Heart left ventricle (tissue), 16 donors: ENCODE measurements at regions of chr15 and their contacts with region 1.

Region 1: DNA sequence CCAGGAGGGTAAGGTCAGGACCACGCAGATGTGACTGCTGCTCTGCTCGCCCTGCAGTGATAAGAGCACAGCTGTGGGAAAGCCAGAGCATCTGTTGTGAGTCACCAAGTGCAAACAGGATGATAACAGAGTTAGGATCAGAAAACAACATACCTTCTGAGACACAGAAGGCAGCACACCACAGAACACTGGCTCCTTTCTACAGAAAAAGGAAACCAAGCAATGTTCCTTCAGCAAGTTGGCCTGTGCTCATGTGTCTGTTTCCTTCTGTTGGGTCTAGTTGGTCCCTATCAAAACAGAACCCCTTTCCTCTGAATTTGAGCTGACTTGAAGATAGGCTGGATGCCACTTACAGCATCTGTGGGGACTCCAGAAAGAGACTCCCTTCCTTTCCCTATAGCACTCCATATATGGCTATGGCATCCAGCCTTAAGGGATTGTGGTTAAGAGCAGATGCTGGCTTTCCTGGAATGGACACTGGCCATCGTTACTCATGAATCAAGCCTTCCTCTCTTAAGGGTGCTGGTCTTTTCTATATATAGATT is 440.7 kb upstream of the THBS1 start:
- DNase-seq: no peak
- ATAC-seq: peak; percentile 64 to 82 (median 76)
- H3K4me3 ChIP-seq: no peak overlapping the region
- H3K27ac ChIP-seq: peak overlapping the region in 1 of 12 donors; percentile 56
- H3K4me1 ChIP-seq: peaks cover 0 to 10% (median 0%) of the 10 kb centered on the region in 12 donors
- H3K27me3 ChIP-seq: no peaks in the 10 kb centered on the region
- CTCF ChIP-seq: no peak
- POLR2A ChIP-seq: no peak

Region 2: DNA sequence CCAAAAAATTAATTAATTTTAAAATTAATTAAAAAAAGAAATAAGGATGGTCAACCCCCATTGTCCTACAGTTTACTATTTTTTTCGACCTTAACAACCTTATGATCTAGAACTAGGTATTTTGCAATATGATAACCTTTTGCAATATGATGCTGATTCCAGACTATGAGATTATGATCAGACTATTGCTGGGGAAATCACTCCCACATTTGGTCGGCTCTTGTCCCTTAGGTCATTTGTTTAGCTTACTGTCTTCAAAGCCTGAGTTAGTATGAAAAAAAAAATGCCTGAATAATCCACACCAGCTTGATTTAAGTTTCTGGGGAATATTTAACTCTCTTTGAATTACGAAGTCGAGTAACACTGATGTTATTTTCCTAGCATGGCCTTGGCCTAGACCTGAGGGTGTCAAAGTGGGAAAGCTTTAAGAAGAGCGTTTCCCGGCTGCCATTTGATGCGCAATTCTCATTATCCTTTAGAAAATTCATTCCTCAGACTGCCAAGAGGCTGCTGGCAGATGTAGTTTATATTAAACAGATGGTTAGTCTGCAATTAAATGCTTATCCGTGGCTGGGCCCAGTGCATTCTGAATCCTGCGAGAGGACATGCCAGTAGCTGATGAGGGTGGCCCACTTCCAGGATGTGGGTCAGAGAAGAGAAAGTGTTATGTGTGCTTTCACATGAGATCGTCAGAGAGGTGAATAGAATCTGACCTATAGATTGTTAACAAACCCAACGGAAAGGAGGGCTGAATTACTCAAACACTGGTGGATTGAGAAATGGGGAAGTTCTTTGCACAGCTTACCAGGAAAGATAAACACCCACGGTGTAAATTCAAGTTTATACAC is 55.2 kb before region 1 on chr15:
- intact Hi-C with region 1: no loop called
- DNase-seq: peak in 4 of 5 donors; percentile 22 to 52 (median 46)
- ATAC-seq: peak in 2 of 4 donors; percentile 50 to 79
- H3K4me3 ChIP-seq: no peak overlapping the region
- H3K27ac ChIP-seq: peak overlapping the region in 3 of 12 donors; percentile 18 to 66 (median 28)
- H3K4me1 ChIP-seq: peaks cover 0 to 6% (median 0%) of the 10 kb centered on the region in 12 donors
- H3K27me3 ChIP-seq: no peaks in the 10 kb centered on the region
- CTCF ChIP-seq: no peak
- POLR2A ChIP-seq: no peak

Region 3: DNA sequence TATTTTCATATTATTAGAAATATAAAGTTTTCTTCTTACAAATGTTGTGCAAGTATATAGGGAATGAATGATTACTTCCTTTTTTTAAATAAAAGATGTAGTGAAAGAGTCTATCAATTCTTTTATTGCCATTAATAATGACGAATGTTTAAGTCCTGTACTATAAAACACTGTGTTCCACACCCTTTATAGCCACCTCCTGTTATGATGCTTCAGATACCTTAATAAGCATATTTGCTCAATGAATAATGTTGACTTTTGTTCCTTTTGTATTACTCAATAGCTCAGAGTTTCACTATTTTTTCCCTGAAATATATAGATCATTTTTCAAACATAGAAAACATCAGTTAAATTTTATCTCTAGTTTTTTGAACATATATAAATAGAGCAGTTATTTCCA is 62.5 kb after region 1 on chr15:
- intact Hi-C with region 1: loop called in 1 of 10 experiments (anchors 10 kb)
- DNase-seq: no peak
- ATAC-seq: no peak
- H3K4me3 ChIP-seq: no peak overlapping the region
- H3K27ac ChIP-seq: no peak overlapping the region
- H3K4me1 ChIP-seq: peaks cover 0 to 12% (median 0%) of the 10 kb centered on the region in 12 donors
- H3K27me3 ChIP-seq: no peaks in the 10 kb centered on the region
- CTCF ChIP-seq: no peak
- POLR2A ChIP-seq: no peak

Region 4: DNA sequence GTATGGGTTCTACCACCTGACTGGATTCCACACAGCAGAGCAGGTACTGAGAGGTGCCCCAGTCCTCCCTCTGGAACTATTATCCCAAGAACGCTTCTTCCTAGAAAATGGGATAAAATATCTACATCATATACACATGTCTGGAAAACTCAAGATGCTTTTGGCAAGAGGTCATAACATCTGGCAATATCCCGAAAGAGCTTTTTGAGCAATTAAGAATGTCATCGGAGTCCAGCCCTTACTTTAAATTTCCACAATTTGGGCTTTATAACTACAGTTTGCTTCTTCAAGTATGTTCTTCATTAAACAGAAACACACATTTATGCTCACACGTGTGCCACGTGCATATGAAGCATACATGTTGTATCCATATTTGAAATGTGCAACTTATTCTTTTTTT is 74.9 kb after region 1 on chr15:
- intact Hi-C with region 1: no loop called
- DNase-seq: no peak
- ATAC-seq: no peak
- H3K4me3 ChIP-seq: no peak overlapping the region
- H3K27ac ChIP-seq: peak overlapping the region in 1 of 12 donors; percentile 41
- H3K4me1 ChIP-seq: peaks cover 0 to 13% (median 0%) of the 10 kb centered on the region in 12 donors
- H3K27me3 ChIP-seq: no peaks in the 10 kb centered on the region
- CTCF ChIP-seq: no peak
- POLR2A ChIP-seq: no peak

Region 5: GRCh38 chr15:39767921-39768320 is 627.8 kb after region 1 on chr15:
- intact Hi-C with region 1: loop called in 1 of 10 experiments (anchors 10 kb)
- DNase-seq: no peak
- ATAC-seq: no peak
- H3K4me3 ChIP-seq: no peak overlapping the region
- H3K27ac ChIP-seq: no peak overlapping the region
- H3K4me1 ChIP-seq: peaks cover 0 to 10% (median 0%) of the 10 kb centered on the region in 12 donors
- H3K27me3 ChIP-seq: no peaks in the 10 kb centered on the region
- CTCF ChIP-seq: no peak
- POLR2A ChIP-seq: no peak